ENCODE measurements at regions of chr4 and their contacts with region 1.

Region 1: DNA sequence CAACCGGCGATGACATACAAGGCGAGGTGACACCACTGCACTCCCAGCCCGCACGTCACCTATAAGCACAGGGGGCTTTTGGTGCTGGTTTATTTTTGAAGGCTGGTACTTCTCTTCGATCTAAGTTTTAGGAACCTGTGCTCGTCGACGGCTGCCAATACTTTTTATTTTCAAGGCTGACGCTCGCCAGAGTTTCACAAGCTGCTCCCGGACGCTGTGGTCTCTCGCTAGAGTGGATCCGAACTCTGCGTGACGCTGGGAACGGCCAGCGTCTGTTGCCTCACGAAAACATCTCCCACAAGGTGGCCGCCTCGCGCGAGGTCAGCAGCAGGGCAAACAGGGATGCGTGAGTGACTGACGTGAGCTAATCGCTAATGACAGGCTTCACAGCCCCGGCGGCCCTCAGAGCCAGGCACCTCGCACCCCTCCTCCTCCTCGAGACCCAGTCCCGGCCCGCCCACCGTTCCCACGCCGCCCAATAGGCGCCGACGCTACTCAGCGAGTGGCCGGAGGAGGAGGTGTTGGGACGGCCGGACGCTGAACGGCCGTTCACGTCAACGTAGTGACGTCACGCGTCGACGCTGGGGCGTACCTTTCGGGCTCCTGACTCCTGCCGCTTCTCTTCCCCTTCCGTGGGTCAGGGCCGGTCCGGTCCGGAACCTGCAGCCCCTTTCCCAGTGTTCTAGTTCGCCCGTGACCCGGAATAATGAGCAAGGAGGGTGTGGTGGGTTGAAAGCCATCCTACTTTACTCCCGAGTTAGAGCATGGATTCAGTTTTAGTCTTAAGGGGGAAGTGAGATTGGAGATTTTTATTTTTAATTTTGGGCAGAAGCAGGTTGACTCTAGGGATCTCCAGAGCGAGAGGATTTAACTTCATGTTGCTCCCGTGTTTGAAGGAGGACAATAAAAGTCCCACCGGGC is at the start of gene CLCN3:
- DNase-seq: peak; percentile 74 to 90 (median 76)
- ATAC-seq: peak; percentile 88
- H3K4me3 ChIP-seq: peak within 1 kb of the TSS; percentile 92
- H3K4me3 Mint-ChIP-seq: peak within 1 kb of the TSS; percentile 89 to 99 (median 98)
- H3K27ac ChIP-seq: peak within 1 kb of the TSS; percentile 96
- H3K27ac Mint-ChIP-seq: peak within 1 kb of the TSS; percentile 88 to 99 (median 98)
- H3K4me1 ChIP-seq: peaks cover 26 to 32% of the 10 kb centered on the region in 2 donors
- H3K4me1 Mint-ChIP-seq: peaks cover 25 to 76% (median 60%) of the 10 kb centered on the region in 7 donors
- H3K27me3 ChIP-seq: no peaks in the 10 kb centered on the region
- H3K27me3 Mint-ChIP-seq: no peaks in the 10 kb centered on the region
- total RNA-seq, gene CLCN3: 15.5 to 35.0 (median 29.3) TPM

Region 2: DNA sequence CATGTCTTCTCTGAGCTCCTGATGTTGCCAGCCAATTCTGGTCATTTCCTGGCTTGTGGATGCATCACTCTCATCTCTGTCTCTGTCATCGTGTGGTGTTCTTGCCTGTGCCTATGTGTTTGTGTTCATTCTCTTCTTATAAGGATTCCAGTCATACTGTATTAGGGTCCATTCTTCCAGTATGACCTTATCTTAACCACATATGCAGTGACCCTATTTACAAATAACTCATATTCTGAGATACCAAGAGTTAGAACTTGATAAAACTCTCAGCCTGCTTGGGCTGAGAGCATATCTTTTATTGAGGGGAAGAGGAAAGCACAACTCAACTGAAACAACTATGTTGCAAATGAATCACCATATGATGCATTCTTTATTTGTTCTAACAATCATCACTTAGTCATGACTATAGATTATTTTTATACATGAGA is 1716.9 kb before region 1 on chr4:
- CTCF ChIA-PET with region 1: no interaction called
- POLR2A ChIA-PET with region 1: no interaction called
- intact Hi-C with region 1: no loop called
- DNase-seq: no peak
- ATAC-seq: no peak
- H3K4me3 ChIP-seq: no peak overlapping the region
- H3K4me3 Mint-ChIP-seq: no peak overlapping the region
- H3K27ac ChIP-seq: no peak overlapping the region
- H3K27ac Mint-ChIP-seq: no peak overlapping the region
- H3K4me1 ChIP-seq: no peaks in the 10 kb centered on the region
- H3K4me1 Mint-ChIP-seq: no peaks in the 10 kb centered on the region
- H3K27me3 ChIP-seq: no peaks in the 10 kb centered on the region
- H3K27me3 Mint-ChIP-seq: no peaks in the 10 kb centered on the region

Region 3: DNA sequence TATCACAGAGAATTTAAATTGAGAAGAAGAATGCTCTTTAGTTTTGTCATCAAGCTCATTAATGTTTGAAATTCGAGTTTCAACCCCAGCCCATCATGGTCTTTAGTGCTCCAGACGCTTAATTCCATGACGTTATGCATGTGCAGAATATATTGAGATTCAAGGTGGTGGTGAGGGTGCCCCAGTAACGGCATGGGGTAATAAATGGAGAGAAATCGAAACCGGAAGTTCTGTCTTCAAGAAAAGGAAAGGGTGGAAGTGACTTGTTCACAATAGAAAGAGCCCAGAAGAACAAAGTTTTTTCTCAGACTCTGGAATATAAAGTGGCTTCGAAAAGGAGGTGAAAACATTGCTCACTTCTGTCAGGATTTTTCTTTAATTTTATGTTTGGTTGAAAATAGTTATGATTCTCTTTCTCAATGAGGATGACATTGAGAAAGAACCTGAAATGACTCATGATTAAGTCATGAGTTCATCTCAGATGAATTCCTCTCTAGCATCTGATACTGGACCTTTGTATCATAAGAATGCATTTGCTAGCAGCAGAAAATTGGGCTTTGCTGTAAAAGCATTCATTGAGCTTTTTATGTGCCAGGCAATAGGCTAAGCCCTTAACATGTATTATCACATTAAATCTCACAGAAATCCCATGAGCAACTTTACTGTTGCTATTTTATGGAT is 1139.1 kb before region 1 on chr4:
- CTCF ChIA-PET with region 1: no interaction called
- POLR2A ChIA-PET with region 1: no interaction called
- intact Hi-C with region 1: loop called in 1 of 2 experiments (anchors 1 kb)
- DNase-seq: peak in 8 of 9 donors; percentile 22 to 85 (median 78)
- ATAC-seq: peak; percentile 75
- H3K4me3 ChIP-seq: peak overlapping the region; percentile 72
- H3K4me3 Mint-ChIP-seq: peak overlapping the region; percentile 88 to 100 (median 98)
- H3K27ac ChIP-seq: peak overlapping the region; percentile 95
- H3K27ac Mint-ChIP-seq: peak overlapping the region; percentile 98 to 100 (median 99)
- H3K4me1 ChIP-seq: peaks cover 20 to 33% of the 10 kb centered on the region in 2 donors
- H3K4me1 Mint-ChIP-seq: peaks cover 46 to 82% (median 74%) of the 10 kb centered on the region in 7 donors
- H3K27me3 ChIP-seq: no peaks in the 10 kb centered on the region
- H3K27me3 Mint-ChIP-seq: no peaks in the 10 kb centered on the region

Region 4: GRCh38 chr4:168923526-168924194 is 696.6 kb before region 1 on chr4:
- CTCF ChIA-PET with region 1: no interaction called
- POLR2A ChIA-PET with region 1: no interaction called
- intact Hi-C with region 1: loop called in 1 of 2 experiments (anchors 2 kb)
- DNase-seq: peak in 8 of 9 donors; percentile 23 to 58 (median 42)
- ATAC-seq: peak; percentile 78
- H3K4me3 ChIP-seq: no peak overlapping the region
- H3K4me3 Mint-ChIP-seq: no peak overlapping the region
- H3K27ac ChIP-seq: no peak overlapping the region
- H3K27ac Mint-ChIP-seq: peak overlapping the region in 1 of 9 donors; percentile 78
- H3K4me1 ChIP-seq: no peaks in the 10 kb centered on the region
- H3K4me1 Mint-ChIP-seq: peaks cover 0 to 3% (median 0%) of the 10 kb centered on the region in 7 donors
- H3K27me3 ChIP-seq: no peaks in the 10 kb centered on the region
- H3K27me3 Mint-ChIP-seq: no peaks in the 10 kb centered on the region

Region 5: GRCh38 chr4:169640261-169640870 is 20.1 kb after region 1 on chr4:
- CTCF ChIA-PET with region 1: no interaction called
- POLR2A ChIA-PET with region 1: no interaction called
- intact Hi-C with region 1: loop called in 1 of 2 experiments (anchors 2 kb)
- DNase-seq: no peak
- ATAC-seq: no peak
- H3K4me3 ChIP-seq: no peak overlapping the region
- H3K4me3 Mint-ChIP-seq: no peak overlapping the region
- H3K27ac ChIP-seq: no peak overlapping the region
- H3K27ac Mint-ChIP-seq: no peak overlapping the region
- H3K4me1 ChIP-seq: no peaks in the 10 kb centered on the region
- H3K4me1 Mint-ChIP-seq: peaks cover 4 to 12% (median 8%) of the 10 kb centered on the region in 7 donors
- H3K27me3 ChIP-seq: no peaks in the 10 kb centered on the region
- H3K27me3 Mint-ChIP-seq: no peaks in the 10 kb centered on the region

Region 6: DNA sequence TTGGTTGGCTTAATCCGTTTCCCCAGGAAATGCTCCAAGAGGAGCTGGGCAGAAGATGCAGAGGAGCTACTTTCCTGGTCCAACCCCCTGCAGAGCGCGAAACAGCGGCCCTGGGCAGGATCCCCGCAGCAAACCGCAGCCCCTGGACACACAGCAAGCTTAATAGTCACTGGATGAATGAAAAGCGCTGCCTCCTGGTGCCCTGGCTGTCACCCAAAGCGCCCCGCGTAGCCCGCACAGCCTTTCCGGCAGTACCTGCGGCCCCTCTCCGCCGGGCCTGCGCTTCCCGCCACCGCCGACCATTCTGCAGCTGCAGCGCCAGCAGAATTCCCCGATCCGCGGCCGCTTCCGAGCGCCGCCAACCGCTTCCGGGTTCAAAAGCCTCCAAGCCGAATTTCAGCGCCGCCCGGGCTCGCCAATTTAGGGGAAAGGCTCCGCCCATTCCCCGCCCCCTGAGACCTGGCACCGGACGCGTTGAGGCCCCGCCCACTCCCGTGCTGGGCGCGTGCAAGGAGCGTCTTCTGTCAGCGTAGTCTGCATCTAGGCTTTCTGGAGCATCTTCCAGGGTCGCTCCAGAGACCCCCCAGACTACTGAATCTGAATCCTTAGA is 137.5 kb after region 1 on chr4 and contains the start of gene HPF1:
- CTCF ChIA-PET with region 1: no interaction called
- POLR2A ChIA-PET with region 1: no interaction called
- intact Hi-C with region 1: loop called (anchors 1 kb)
- DNase-seq: peak; percentile 84 to 93 (median 89)
- ATAC-seq: peak; percentile 98
- H3K4me3 ChIP-seq: peak within 1 kb of the TSS; percentile 83
- H3K4me3 Mint-ChIP-seq: peak within 1 kb of the TSS; percentile 82 to 92 (median 88)
- H3K27ac ChIP-seq: peak within 1 kb of the TSS; percentile 66
- H3K27ac Mint-ChIP-seq: peak within 1 kb of the TSS; percentile 52 to 81 (median 71)
- H3K4me1 ChIP-seq: peaks cover 0 to 7% of the 10 kb centered on the region in 2 donors
- H3K4me1 Mint-ChIP-seq: peaks cover 19 to 38% (median 30%) of the 10 kb centered on the region in 7 donors
- H3K27me3 ChIP-seq: no peaks in the 10 kb centered on the region
- H3K27me3 Mint-ChIP-seq: peaks cover 0 to 22% (median 0%) of the 10 kb centered on the region in 5 donors
- total RNA-seq, gene HPF1: 9.9 to 23.5 (median 13.8) TPM

Region 7: DNA sequence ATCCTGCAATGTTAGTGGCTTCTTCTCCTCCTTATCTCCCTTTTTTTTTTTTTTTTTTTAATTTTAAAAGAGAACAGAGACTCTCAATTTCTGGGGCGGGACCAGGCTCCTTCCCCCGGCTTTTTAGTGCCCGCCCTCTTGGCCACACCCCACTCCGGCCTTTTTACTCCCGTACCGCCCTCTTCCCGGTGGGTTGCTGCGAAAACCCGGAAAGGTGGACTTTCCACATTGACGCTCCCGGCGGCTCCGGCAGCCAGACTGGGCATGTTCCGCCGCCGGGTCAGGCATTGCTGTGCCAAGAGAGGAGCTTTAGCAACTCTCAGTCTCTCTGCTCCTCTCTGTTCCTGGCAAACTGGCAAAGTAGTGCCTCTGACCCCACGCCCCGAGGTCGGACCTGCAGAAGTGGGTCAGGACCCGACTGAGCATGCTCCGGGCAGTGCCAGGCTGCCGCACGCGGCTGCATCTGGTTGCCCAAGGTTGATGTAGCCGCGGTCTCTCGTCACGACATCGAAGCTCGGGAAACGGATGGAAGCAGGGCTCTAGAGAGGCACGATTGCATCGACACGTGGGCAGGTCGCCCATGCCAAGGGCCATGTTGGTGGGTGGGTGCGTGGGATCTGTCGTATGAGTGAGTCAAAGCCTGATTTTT is 407.1 kb after region 1 on chr4:
- CTCF ChIA-PET with region 1: no interaction called
- POLR2A ChIA-PET with region 1: interaction called, 3 read pairs
- intact Hi-C with region 1: loop called in 1 of 2 experiments (anchors 1 kb)
- DNase-seq: peak; percentile 76 to 92 (median 89)
- ATAC-seq: peak; percentile 83
- H3K4me3 ChIP-seq: peak overlapping the region; percentile 71
- H3K4me3 Mint-ChIP-seq: peak overlapping the region; percentile 86 to 96 (median 94)
- H3K27ac ChIP-seq: peak overlapping the region; percentile 59
- H3K27ac Mint-ChIP-seq: peak overlapping the region; percentile 65 to 89 (median 81)
- H3K4me1 ChIP-seq: peaks cover 0 to 7% of the 10 kb centered on the region in 2 donors
- H3K4me1 Mint-ChIP-seq: peaks cover 6 to 14% (median 11%) of the 10 kb centered on the region in 7 donors
- H3K27me3 ChIP-seq: no peaks in the 10 kb centered on the region
- H3K27me3 Mint-ChIP-seq: peaks cover 0 to 60% (median 8%) of the 10 kb centered on the region in 5 donors

Measured in naive thymus-derived CD4-positive, alpha-beta T cell (primary cell).